T-cell (primary cell): ENCODE measurements at regions of chr10 and their contacts with region 1.

Region 1: DNA sequence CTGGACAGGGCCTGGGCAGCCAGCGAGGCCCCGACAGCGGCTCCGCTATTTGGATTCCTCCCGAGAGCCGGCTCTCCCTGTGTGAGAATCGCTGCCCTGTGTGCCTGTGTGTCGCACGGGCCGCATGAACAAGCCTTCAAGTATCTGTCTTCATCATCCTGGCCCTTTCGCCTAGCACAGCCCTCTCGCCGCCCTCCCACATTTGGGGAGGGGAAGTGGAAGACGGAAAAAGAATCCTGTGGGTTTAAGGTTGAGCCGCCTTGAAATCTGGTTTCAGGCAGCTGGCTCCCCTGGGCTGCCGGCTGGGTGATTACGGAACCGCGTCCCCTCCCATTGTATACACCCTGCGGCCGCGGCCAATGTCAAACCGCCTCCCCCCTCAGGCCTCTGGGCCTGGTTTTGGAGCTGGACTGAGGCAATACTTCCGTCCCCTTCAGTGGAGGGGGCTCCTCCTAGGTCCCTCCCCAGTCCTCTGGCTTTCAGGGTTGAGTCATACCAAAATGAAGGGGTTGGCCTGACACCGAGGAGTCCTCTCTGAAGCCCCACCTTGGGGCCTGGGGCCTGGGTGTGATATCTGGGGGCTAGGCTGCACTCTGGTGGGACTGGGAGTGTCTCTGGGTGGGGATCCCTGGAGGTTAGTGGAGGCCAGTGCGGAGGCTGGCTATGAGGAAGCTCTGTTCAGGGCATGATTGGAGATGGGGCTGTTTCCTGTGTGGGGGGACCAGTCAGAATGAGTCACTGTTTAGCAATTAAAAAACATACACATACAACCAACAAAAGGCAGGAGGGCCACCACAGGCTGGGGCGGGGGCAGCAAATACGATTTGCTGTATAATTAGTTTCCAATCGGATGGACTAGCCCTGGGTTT is 1.7 kb downstream of the TRIM8 start:
- DNase-seq: peak; percentile 46 to 80 (median 61)
- ATAC-seq: peak; percentile 12 to 35 (median 29)
- H3K4me3 ChIP-seq: peak overlapping the region; percentile 95 to 96
- H3K4me3 Mint-ChIP-seq: peak overlapping the region; percentile 95 to 98 (median 97)
- H3K27ac ChIP-seq: peak overlapping the region; percentile 94
- H3K27ac Mint-ChIP-seq: peak overlapping the region; percentile 94 to 98
- H3K4me1 ChIP-seq: peaks cover 45 to 66% of the 10 kb centered on the region in 2 experiments
- H3K4me1 Mint-ChIP-seq: peaks cover 51 to 65% (median 57%) of the 10 kb centered on the region in 3 donors
- H3K27me3 ChIP-seq: no peaks in the 10 kb centered on the region
- H3K27me3 Mint-ChIP-seq: no peaks in the 10 kb centered on the region

Region 2: GRCh38 chr10:101060036-101060950 is 1585.7 kb before region 1 on chr10:
- CTCF ChIA-PET with region 1: no interaction called
- POLR2A ChIA-PET with region 1: no interaction called
- DNase-seq: peak; percentile 67 to 94 (median 86)
- ATAC-seq: peak; percentile 75 to 81 (median 76)
- H3K4me3 ChIP-seq: peak overlapping the region; percentile 99 to 100
- H3K4me3 Mint-ChIP-seq: peak overlapping the region; percentile 86 to 93 (median 87)
- H3K27ac ChIP-seq: peak overlapping the region; percentile 90
- H3K27ac Mint-ChIP-seq: peak overlapping the region; percentile 91 to 98
- H3K4me1 ChIP-seq: peaks cover 11 to 34% of the 10 kb centered on the region in 2 experiments
- H3K4me1 Mint-ChIP-seq: peaks cover 22 to 35% (median 23%) of the 10 kb centered on the region in 3 donors
- H3K27me3 ChIP-seq: peaks cover 6 to 32% of the 10 kb centered on the region in 2 experiments
- H3K27me3 Mint-ChIP-seq: peaks cover 17 to 19% of the 10 kb centered on the region in 2 donors

Region 3: DNA sequence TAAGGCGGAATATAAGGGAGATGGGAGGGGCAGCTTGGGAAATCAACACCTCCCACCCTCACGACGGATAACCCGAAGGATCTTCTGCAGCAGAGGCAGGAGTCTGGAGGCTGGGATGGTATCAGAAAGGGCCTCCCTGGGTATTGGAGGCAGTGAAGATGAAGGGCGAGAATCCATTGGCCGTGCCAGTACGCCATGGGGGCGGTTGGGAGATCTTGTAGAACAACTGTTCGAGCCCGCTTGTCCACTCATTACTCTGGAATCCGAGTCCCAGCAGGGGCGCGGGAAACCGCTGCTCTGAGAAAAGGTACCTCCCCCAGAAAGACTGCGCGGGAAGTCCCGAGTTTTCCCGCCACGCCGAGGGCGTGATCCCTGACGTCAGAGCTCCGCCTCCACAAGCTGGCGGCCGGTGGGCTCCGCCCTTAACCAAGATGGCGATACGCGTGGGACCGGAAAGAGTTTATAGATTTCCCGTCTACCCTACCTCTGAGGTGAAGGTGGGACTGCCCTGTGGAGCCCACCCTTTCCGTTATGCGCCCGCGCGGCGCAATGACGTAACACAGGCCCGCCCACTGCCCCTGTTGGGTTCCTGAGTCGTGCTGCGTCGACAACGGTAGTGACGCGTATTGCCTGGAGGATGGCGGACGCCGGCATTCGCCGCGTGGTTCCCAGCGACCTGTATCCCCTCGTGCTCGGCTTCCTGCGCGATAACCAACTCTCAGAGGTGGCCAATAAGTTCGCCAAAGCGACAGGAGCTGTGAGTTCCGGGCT is 494.0 kb before region 1 on chr10 and contains the start of gene NOLC1:
- CTCF ChIA-PET with region 1: no interaction called
- POLR2A ChIA-PET with region 1: no interaction called
- DNase-seq: peak; percentile 99 to 100 (median 100)
- ATAC-seq: peak; percentile 93 to 97 (median 95)
- H3K4me3 ChIP-seq: peak within 1 kb of the TSS; percentile 63 to 94
- H3K4me3 Mint-ChIP-seq: peak within 1 kb of the TSS; percentile 89 to 96 (median 94)
- H3K27ac ChIP-seq: peak within 1 kb of the TSS; percentile 94
- H3K27ac Mint-ChIP-seq: peak within 1 kb of the TSS; percentile 89 to 93
- H3K4me1 ChIP-seq: peaks cover 9 to 38% of the 10 kb centered on the region in 2 experiments
- H3K4me1 Mint-ChIP-seq: peaks cover 46 to 53% (median 47%) of the 10 kb centered on the region in 3 donors
- H3K27me3 ChIP-seq: no peaks in the 10 kb centered on the region
- H3K27me3 Mint-ChIP-seq: no peaks in the 10 kb centered on the region
- total RNA-seq, gene NOLC1: 40.7 to 69.8 (median 62.4) TPM

Region 4: GRCh38 chr10:102673819-102674511 is 28.0 kb after region 1 on chr10:
- CTCF ChIA-PET with region 1: interaction called, 4 to 10 read pairs
- POLR2A ChIA-PET with region 1: interaction called, 3 to 12 read pairs
- DNase-seq: peak; percentile 44 to 90 (median 69)
- ATAC-seq: peak; percentile 90 to 95 (median 93)
- H3K4me3 ChIP-seq: peak overlapping the region; percentile 35 to 48
- H3K4me3 Mint-ChIP-seq: peak overlapping the region; percentile 72 to 78 (median 74)
- H3K27ac ChIP-seq: peak overlapping the region; percentile 67
- H3K27ac Mint-ChIP-seq: peak overlapping the region; percentile 90 to 96
- H3K4me1 ChIP-seq: peaks cover 30 to 55% of the 10 kb centered on the region in 2 experiments
- H3K4me1 Mint-ChIP-seq: peaks cover 42 to 65% (median 62%) of the 10 kb centered on the region in 3 donors
- H3K27me3 ChIP-seq: no peaks in the 10 kb centered on the region
- H3K27me3 Mint-ChIP-seq: no peaks in the 10 kb centered on the region

Region 5: DNA sequence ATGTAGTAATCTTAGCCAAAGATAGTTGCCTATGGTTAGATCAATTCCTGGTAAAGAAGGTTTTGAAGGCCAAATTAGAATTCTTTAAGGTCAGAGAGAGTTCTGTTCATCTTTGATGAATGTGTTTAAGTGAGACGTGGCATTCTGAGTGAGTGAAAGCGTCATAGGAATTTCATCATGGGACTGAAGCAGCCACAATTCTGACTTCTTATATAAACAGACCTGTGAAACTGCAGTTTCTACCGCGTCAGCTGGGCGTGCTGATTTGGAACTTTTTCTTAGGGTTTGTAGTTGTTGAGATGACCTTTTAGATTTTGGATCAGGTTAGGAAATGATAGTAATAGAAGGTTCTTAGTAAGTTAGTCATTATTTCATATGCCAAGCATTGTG is 375.9 kb after region 1 on chr10:
- CTCF ChIA-PET with region 1: no interaction called
- POLR2A ChIA-PET with region 1: no interaction called
- DNase-seq: no peak
- ATAC-seq: no peak
- H3K4me3 ChIP-seq: no peak overlapping the region
- H3K4me3 Mint-ChIP-seq: no peak overlapping the region
- H3K27ac ChIP-seq: no peak overlapping the region
- H3K27ac Mint-ChIP-seq: no peak overlapping the region
- H3K4me1 ChIP-seq: no peaks in the 10 kb centered on the region
- H3K4me1 Mint-ChIP-seq: peaks cover 0 to 11% (median 3%) of the 10 kb centered on the region in 3 donors
- H3K27me3 ChIP-seq: no peaks in the 10 kb centered on the region
- H3K27me3 Mint-ChIP-seq: no peaks in the 10 kb centered on the region